ENCODE measurements at regions of chr18 and their contacts with region 1.

Region 1: DNA sequence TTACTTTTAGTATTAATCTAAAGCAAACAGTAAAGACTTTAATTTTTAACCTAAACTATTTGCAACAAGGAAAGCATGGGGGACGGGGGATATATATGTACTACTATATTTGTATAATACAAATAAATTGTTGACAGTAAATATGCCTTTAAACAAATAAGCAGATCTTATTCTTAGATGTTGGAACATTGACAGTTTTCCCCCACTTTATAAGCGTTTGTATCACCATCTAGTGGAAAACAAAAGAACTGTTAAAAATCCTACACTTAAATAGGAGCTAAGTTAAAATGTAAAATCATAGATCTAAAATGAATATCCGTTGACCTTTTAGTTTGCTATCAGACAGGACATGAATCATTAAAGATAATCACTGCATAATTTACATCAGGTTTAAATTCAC is 50.0 kb downstream of the RBBP8 start:
- DNase-seq: no peak
- ATAC-seq: peak; percentile 37

Region 2: DNA sequence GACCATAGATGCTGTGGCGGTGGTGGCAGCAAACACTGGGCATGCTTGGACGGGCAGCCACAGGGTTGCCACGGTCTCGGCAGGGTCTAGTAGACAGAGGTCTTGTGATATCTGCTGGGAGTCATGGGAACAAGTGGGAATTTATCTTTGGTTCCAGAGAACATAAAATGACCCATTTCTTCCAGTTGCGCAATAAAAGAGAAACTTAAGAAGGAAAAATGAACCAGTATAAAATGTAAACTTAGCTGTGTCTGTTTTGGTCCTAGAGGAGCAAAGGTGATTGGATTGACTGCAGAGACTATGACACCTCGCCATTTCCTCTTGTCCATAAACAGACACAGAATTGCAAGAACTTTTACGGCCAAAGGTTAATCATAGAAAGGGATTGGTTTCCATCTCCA is 182.6 kb before region 1 on chr18:
- intact Hi-C with region 1: loop called in 1 of 2 experiments (anchors 10 kb)
- DNase-seq: no peak
- ATAC-seq: peak; percentile 60

Region 3: DNA sequence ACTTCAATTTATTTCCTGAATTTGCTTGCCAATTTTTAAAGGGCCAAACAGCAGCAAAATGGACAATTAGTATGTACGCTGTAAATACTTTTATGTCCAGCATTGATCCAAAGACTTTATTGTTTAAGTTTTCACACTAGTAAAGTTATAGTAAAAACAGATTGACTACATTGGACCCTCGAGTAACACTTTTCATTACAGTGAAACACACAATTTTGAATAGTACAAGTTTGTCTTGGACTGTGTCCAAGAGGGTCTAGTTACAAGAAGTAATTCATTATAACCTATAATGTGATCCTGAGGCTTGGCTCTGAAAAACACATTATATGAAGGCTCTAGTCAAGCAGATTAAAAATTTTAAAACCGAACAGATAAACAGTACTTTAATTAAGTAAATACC is 61.4 kb before region 1 on chr18:
- intact Hi-C with region 1: loop called in 1 of 2 experiments (anchors 10 kb)
- DNase-seq: no peak
- ATAC-seq: no peak

Region 4: GRCh38 chr18:22933206-22933957 is 49.8 kb before region 1 on chr18 and contains the start of gene RBBP8:
- intact Hi-C with region 1: loop called (anchors 5 to 10 kb)
- DNase-seq: peak; percentile 82 to 90
- ATAC-seq: peak; percentile 92
- total RNA-seq, gene RBBP8: 22.0 to 22.7 TPM

Region 5: GRCh38 chr18:23573626-23574431 is 590.7 kb after region 1 on chr18:
- intact Hi-C with region 1: no loop called
- DNase-seq: no peak
- ATAC-seq: no peak

Measured in left colon (tissue), 2 donors.